GM23248 (cell line): ENCODE measurements at regions of chr22 and their contacts with region 1.

Region 1: DNA sequence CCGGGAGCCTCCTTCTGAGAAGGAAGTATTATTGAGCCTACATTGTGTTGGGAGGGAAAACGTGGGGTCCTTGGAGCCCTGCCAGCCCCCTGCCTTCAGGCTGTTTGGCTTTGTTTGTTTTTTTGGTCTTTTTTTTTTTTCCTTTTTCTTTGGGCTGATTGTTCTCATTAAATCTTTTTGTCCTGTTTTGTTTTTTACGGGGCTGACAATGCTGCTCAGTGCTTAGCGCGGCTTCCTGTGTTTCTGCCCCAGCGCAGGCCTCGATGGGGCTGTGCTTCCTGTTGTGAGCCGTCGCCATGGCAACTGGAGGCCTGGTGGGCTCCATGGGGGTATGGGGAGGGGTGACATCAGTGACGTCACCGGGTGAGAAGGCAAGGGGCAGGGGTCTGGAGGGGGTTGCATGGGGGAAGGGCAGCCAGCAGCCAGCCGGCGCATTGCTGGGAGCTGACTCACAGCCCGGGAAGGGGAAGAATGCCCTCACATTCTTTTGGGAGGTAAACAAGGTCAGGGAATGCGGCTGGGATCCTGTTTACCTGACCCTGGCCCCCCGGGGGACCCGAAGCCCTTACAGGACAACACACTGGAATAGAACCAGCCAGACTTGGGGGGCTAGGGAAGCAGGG is 22.1 kb upstream of the CBX7 start:
- DNase-seq: peak; percentile 79
- H3K4me3 ChIP-seq: no peak overlapping the region
- H3K27ac ChIP-seq: peak overlapping the region; percentile 50
- H3K4me1 ChIP-seq: peaks cover 48% of the 10 kb centered on the region
- H3K27me3 ChIP-seq: no peaks in the 10 kb centered on the region

Region 2: GRCh38 chr22:38927033-38927781 is 247.4 kb before region 1 on chr22:
- in situ Hi-C with region 1: no loop called
- DNase-seq: peak; percentile 74
- H3K4me3 ChIP-seq: peak overlapping the region; percentile 38
- H3K27ac ChIP-seq: no peak overlapping the region
- H3K4me1 ChIP-seq: peaks cover 24% of the 10 kb centered on the region
- H3K27me3 ChIP-seq: peaks cover 20% of the 10 kb centered on the region

Region 3: DNA sequence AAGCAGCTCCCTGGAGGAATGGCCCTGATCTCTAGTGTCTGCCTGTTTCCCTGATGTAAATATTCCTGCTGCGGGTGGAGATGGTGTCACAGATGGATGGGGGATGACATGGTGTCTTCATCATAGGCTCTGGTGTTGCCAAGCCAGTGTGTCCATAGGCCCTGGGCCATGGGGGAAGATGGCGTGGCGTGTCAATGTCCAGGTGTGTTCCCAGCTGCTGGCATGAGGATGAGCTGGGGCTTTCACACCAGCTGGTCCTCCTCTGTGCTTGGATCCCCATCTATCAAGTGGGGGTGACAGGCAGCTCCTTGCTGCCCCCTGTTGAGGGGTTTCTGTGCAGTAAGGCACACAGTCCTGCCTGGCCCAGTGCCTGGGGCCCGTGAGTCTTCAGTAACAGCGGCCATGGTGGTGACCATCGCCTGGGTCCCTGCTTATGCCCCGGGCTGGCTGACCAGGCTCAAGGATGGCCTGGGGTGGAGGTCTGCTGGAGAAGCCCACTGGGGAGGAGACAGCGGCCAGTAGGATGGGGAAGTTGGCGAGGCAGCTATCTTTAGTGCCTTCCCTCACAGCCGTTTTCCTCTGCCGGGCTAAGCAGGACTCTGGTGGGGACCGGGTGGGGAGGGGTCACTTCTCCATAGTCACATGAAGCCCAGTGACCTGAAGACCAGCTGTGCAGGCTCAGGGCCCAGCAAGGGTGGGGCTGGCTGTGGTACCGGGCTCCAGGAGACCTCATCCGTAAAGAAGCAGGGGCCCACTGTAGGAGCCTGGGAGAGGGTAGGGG is 132.2 kb after region 1 on chr22:
- in situ Hi-C with region 1: loop called (anchors 5 kb)
- DNase-seq: no peak
- H3K4me3 ChIP-seq: no peak overlapping the region
- H3K27ac ChIP-seq: no peak overlapping the region
- H3K4me1 ChIP-seq: peaks cover 17% of the 10 kb centered on the region
- H3K27me3 ChIP-seq: no peaks in the 10 kb centered on the region